Panc1 (cell line): ENCODE measurements at regions of chr3 and their contacts with region 1.

Region 1: DNA sequence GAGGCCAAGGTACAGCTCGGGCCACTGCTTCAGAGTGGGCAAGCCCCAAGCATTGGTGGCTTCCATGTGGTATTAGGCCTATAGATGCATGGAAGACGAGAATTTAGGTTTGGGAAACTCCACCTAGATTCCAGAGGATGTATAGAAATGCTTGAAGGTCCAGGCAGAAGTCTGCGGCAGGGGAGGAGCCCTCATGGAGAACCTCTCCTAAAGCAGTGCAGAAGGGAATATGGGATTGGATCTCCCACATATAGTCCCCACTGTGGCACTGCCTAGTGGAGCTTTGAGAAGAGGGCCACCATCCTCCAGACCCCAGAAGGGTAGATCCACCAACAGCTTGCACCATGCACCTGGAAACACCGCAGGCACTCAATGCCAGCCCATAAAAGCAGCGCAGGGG is 48.1 kb upstream of the XXYLT1 start:
- DNase-seq: no peak
- ATAC-seq: no peak
- H3K4me3 ChIP-seq: no peak overlapping the region
- H3K27ac ChIP-seq: no peak overlapping the region
- H3K4me1 ChIP-seq: no peaks in the 10 kb centered on the region
- H3K27me3 ChIP-seq: no peaks in the 10 kb centered on the region
- CTCF ChIP-seq: no peak

Region 2: DNA sequence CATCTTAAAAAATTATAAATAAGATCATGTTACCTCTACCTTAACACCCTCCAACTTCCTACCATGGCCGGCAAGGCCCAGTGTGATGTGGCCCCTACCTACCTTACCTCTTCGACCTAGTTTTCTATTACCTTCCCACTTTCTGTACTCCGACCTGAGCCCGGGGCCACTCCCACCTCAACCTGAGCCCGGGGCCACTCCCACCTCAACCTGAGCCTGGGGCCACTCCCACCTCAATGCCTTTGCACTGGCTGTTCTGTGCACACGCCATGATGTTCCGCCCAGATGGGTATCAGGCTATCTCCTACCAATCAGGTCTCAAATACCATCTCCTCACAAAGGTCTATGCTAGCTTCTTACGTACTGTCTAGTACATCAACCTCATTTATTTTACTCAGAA is 18.7 kb after region 1 on chr3:
- CTCF ChIA-PET with region 1: no interaction called
- POLR2A ChIA-PET with region 1: interaction called, 13 read pairs
- in situ Hi-C with region 1: no loop called
- intact Hi-C with region 1: no loop called
- DNase-seq: no peak
- ATAC-seq: no peak
- H3K4me3 ChIP-seq: no peak overlapping the region
- H3K27ac ChIP-seq: no peak overlapping the region
- H3K4me1 ChIP-seq: no peaks in the 10 kb centered on the region
- H3K27me3 ChIP-seq: no peaks in the 10 kb centered on the region
- CTCF ChIP-seq: no peak